Activated naive CD4-positive, alpha-beta T cell treated with anti-CD3 and anti-CD28 coated beads for 36 hours (primary cell): ENCODE measurements at regions of chr17 and their contacts with region 1.

Region 1: GRCh38 chr17:82297714-82298537 is 19.5 kb downstream of the CD7 start:
- DNase-seq: peak; percentile 97
- H3K4me3 Mint-ChIP-seq: peak overlapping the region; percentile 93
- H3K27ac Mint-ChIP-seq: peak overlapping the region; percentile 100
- H3K4me1 Mint-ChIP-seq: peaks cover 76% of the 10 kb centered on the region
- H3K27me3 Mint-ChIP-seq: no peaks in the 10 kb centered on the region

Region 2: DNA sequence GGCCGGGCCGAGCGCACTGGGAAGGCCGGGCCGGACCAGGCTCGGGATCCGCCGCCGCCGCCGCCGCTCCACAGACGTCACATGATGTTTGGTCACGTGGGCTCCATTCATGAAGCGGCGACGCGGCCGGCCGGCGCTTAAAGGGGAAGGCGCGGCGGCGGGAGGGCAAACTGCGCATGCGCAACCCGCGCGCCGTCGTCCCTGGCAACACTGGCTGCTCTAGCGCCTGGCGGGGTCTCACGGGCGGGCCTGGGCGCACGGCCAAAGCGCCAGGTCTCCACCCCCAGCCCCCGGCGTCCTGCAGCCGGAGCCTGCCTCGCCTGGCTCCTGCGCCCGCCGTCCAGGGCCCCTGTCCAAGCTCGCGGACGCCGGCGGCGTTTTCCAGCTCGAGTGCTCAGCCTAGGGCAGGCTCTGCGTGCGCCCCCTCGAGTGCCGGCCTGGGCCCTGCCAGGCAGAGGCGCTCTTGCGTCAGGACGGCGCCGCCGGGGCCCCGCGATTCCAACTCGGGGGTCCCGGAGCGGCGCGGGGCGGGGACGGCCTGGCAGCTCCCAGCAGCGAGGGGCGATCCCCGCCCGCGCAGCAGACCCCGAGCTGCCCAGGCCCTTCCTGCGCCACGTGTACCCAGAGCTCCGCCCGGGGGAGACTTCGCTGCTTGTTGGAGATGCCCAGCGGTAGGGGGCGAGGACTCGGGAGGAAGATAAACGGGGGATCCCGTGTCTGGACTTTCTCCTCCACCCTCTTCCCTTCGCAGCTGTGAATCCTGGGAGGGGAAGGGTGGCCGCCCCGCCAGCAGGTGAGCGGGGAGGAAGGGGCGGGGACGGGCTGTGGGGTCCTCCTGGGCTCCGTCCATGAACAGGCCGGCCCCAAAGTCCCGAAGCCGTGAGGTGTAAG is 370.0 kb before region 1 on chr17 and contains the start of gene MAFG:
- CTCF ChIA-PET with region 1: no interaction called
- intact Hi-C with region 1: no loop called
- DNase-seq: peak; percentile 88
- H3K4me3 Mint-ChIP-seq: peak within 1 kb of the TSS; percentile 76
- H3K27ac Mint-ChIP-seq: peak within 1 kb of the TSS; percentile 86
- H3K4me1 Mint-ChIP-seq: peaks cover 26% of the 10 kb centered on the region
- H3K27me3 Mint-ChIP-seq: peaks cover 5% of the 10 kb centered on the region
- total RNA-seq, gene MAFG: 13.5 to 14.8 TPM

Region 3: DNA sequence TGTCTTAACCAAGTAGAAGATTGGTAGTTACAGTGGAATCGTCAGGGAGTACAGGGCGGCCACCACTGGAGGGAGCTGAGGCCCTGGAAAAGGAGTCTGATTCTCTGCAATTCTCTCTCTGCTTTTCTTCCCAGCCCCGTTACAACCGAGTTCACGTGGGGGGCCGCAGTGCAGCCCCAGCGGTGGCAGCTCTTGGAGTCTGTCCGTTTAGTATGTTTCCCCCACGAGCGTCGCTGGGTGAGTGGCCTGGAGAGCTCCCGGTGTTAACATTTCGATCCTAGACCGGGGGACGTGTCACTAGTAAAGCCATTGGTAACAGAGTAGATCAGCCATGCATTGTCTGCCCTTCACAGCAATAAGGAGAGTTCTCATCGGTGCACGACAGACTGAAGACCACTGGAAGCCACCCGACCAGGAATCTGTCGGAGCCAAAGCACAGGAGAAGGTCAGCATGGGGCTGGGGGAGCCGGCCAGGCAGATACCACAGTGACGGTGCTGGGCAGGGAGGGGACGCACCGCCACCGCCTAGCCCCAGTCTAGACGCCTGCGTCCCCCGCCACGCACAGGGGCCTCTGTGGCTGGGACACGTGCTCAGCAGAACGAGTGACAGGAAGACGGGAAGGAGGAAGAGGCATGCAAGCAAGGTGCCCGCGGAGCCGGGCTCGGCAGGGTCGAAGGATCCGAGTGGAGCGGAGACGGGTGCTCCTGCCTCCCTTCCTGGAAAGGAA is 53.3 kb before region 1 on chr17:
- CTCF ChIA-PET with region 1: no interaction called
- intact Hi-C with region 1: loop called (anchors 2 kb)
- DNase-seq: peak; percentile 54
- H3K4me3 Mint-ChIP-seq: no peak overlapping the region
- H3K27ac Mint-ChIP-seq: peak overlapping the region; percentile 13
- H3K4me1 Mint-ChIP-seq: peaks cover 36% of the 10 kb centered on the region
- H3K27me3 Mint-ChIP-seq: no peaks in the 10 kb centered on the region

Region 4: GRCh38 chr17:82320956-82321927 is 23.3 kb after region 1 on chr17:
- CTCF ChIA-PET with region 1: interaction called, 60 read pairs
- intact Hi-C with region 1: loop called (anchors 1 kb)
- DNase-seq: peak; percentile 93
- H3K4me3 Mint-ChIP-seq: peak overlapping the region; percentile 79
- H3K27ac Mint-ChIP-seq: peak overlapping the region; percentile 97
- H3K4me1 Mint-ChIP-seq: peaks cover 42% of the 10 kb centered on the region
- H3K27me3 Mint-ChIP-seq: no peaks in the 10 kb centered on the region

Region 5: GRCh38 chr17:82450170-82451106 is 152.5 kb after region 1 on chr17 and contains the start of gene CYBC1:
- CTCF ChIA-PET with region 1: no interaction called
- intact Hi-C with region 1: loop called (anchors 1 kb)
- DNase-seq: peak; percentile 97
- H3K4me3 Mint-ChIP-seq: peak within 1 kb of the TSS; percentile 94
- H3K27ac Mint-ChIP-seq: peak within 1 kb of the TSS; percentile 99
- H3K4me1 Mint-ChIP-seq: peaks cover 41% of the 10 kb centered on the region
- H3K27me3 Mint-ChIP-seq: no peaks in the 10 kb centered on the region
- total RNA-seq, gene CYBC1: 292 to 294 TPM

Region 6: DNA sequence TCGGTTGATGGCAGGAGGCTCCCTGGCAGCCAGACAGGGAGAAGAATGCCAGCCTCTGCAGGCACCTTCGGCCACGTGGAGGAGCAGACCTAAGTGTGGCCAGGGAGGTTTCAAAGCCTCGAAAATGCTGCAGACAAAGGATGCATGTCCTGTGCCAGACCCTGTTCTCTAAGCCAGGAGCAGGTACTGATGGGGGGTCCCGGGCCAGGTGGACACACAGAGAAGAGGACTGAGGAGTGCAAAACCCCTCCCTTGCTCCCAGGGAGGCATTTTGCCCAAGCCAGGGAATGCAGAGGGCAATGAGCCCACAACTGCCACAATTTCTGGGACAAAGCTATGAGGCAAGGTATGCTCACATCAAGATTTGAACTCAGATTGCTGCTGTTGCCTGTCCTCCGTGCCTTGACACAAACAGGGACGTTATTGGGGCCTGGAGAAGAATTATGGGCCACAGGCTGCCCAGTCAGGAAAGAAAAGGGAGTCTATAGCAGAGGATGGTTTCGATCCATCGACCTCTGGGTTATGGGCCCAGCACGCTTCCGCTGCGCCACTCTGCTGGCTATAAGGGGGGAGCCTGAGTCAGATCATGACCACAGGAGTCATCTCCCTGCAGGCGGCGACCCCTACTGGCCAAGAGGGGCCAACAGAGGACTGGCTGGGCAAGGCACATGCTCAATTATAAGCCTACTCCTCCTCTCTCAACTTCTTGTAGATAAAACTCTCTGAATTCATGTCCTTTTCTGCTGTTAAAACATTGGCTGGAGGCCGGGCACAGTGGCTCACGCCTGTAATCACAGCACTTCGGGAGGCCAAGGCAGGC is 196.5 kb after region 1 on chr17:
- CTCF ChIA-PET with region 1: no interaction called
- intact Hi-C with region 1: loop called (anchors 1 kb)
- DNase-seq: peak; percentile 94
- H3K4me3 Mint-ChIP-seq: peak overlapping the region; percentile 70
- H3K27ac Mint-ChIP-seq: peak overlapping the region; percentile 81
- H3K4me1 Mint-ChIP-seq: peaks cover 21% of the 10 kb centered on the region
- H3K27me3 Mint-ChIP-seq: no peaks in the 10 kb centered on the region